ENCODE measurements at regions of chr17 and their contacts with region 1.

Region 1: GRCh38 chr17:10327640-10328039 is 45.2 kb downstream of the MYH13 start:
- DNase-seq: peak; percentile 85
- CTCF ChIP-seq: peak; percentile 86

Region 2: GRCh38 chr17:10127819-10128425 is 199.7 kb before region 1 on chr17:
- CTCF ChIA-PET with region 1: no interaction called
- POLR2A ChIA-PET with region 1: no interaction called
- DNase-seq: no peak
- CTCF ChIP-seq: no peak

Region 3: DNA sequence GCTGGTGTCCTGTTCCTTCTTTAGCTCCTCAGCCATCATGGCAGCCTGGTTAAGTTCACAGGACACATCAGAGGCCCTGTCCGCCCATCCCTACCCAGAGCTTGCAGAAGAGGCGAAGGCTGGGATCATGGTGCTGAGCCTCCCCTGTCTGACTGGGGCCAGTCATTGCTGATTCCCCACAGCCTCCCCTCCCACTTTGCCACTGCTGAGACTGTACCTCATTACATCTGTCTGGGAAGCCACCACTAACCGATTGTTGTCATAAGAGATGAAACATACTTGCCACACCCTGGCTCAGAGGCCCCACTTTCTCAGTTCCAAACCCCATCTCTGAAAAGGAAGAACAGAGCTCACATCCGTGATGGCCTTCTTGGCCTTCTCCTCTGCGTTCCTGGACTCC is 21.1 kb before region 1 on chr17:
- CTCF ChIA-PET with region 1: no interaction called
- POLR2A ChIA-PET with region 1: no interaction called
- DNase-seq: no peak
- CTCF ChIP-seq: no peak

Region 4: DNA sequence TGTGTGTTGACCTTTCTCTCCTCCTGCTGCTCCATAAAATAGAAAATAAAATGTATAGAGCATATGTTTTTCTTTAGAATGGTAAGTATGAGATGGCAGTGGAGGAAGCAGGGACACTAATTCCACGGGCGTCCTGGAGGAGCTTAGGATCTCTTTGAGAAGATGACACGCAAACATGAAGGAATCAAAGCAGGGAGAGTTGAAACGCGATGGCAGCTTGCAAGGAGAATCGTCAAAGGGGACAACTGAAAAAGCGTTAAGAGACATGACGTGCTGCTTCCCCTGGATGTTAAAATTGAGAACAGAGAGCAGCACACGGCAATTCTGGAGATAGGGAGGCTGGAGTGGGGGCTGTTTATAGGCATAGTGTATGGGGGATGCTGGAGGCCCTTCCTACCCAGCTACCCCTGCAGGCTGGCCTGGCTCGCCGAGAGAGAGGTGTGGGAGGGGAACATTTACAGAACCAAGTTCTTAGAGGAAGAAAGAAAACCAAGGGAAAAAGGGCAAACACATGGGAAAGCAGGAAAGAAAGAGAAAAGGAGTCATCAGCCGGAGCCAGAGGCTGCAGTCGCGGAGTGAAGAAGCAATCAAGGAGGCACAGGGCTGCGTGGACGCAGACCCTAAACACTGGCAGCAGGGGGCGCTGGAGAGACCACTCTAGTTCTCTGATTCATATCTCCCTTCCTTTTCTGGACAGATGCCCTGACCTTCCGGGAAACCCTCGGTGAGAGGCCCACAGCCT is 10.7 kb before region 1 on chr17:
- CTCF ChIA-PET with region 1: interaction called, 10 read pairs
- POLR2A ChIA-PET with region 1: no interaction called
- DNase-seq: peak; percentile 70
- CTCF ChIP-seq: peak; percentile 48

Region 5: DNA sequence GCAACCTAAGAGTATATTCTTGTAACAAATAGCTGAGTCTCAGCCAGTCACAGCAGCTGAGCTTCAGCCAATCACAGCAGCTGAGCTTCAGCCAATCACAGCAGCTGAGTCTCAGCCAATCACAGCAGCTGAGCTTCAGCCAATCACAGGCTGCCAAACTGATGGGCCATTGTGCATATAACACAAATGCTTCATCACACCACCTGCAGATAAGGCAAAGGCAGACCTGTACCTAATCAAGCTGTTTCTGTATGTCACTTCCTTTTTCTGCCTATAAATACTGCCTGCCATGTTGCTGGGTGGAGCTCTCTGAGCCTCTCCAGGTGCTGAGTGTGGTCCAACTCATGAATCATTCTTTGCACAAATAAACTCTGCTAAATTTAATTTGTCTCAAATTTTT is 25.3 kb after region 1 on chr17:
- CTCF ChIA-PET with region 1: interaction called, 10 read pairs
- POLR2A ChIA-PET with region 1: no interaction called
- DNase-seq: no peak
- CTCF ChIP-seq: no peak

Region 6: GRCh38 chr17:10492004-10492403 is 164.4 kb after region 1 on chr17:
- CTCF ChIA-PET with region 1: no interaction called
- POLR2A ChIA-PET with region 1: no interaction called
- DNase-seq: no peak
- CTCF ChIP-seq: no peak